PC-9 (cell line): ENCODE measurements at regions of chr19 and their contacts with region 1.

Region 1: DNA sequence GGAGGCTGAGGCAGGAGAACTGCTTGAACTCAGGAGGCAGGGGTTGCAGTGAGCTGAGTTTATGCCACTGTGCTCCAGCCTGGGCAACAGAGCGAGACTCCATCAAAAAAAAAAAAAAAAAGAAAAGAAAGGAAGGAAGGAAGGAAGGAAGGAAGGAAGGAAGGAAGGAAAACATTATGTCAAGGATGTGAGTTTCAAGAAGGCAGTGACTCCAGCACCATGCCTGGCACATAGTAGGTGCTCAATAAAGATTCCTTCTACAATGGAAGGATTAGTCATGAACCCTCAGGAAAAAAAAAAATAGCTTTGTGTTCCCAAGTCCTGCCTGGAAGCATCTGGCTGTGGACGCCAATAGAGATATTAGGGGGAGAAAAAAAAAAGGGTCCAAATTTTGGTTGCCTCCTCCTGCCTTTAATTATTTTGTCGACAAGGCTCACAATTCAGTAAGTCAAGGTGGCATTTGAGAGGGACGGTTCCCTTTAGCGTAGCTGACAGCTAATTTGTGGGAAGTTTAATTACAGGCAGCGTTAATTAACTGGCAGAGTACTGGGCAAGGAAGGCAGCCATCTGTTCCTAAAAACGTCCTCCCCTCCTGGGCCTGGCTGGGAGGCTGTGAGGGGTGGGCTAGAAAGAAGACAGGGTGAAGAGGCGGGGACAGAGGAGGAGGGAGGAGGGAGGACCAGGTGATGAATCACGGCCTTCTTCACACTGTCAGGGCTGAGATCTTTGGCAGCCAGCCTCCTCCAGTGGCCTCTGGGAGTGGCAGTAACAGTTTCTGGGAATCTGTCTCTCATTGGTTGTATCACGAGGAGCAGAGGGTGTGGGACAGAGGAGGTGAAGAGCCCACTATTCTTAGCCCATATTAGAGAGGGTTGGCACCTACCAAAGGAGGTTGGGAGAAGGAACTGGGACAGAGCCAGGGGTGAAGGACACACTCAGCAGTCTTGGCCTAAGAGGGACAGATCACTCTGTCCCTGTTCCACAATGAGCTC is 9.8 kb upstream of the ZNRF4 start:
- DNase-seq: no peak
- H3K4me3 ChIP-seq: no peak overlapping the region
- H3K27ac ChIP-seq: no peak overlapping the region
- H3K4me1 ChIP-seq: no peaks in the 10 kb centered on the region
- H3K27me3 ChIP-seq: 0 out of 2 replicates have a peak, but pooled peaks cover 2% of the 10 kb centered on the region
- CTCF ChIP-seq: no peak

Region 2: GRCh38 chr19:4589579-4590410 is 855.6 kb before region 1 on chr19:
- CTCF ChIA-PET with region 1: no interaction called
- POLR2A ChIA-PET with region 1: no interaction called
- intact Hi-C with region 1: no loop called
- DNase-seq: no peak
- H3K4me3 ChIP-seq: no peak overlapping the region
- H3K27ac ChIP-seq: no peak overlapping the region
- H3K4me1 ChIP-seq: no peaks in the 10 kb centered on the region
- H3K27me3 ChIP-seq: peaks cover 8% of the 10 kb centered on the region
- CTCF ChIP-seq: peak; percentile 50; the same call in 1 of the 2 replicates

Region 3: GRCh38 chr19:5424192-5424973 is 21.0 kb before region 1 on chr19:
- CTCF ChIA-PET with region 1: interaction called, 12 read pairs
- POLR2A ChIA-PET with region 1: no interaction called
- intact Hi-C with region 1: no loop called
- DNase-seq: no peak
- H3K4me3 ChIP-seq: no peak overlapping the region
- H3K27ac ChIP-seq: no peak overlapping the region
- H3K4me1 ChIP-seq: no peaks in the 10 kb centered on the region
- H3K27me3 ChIP-seq: peaks cover 56% of the 10 kb centered on the region
- CTCF ChIP-seq: no peak

Region 4: GRCh38 chr19:5492635-5493409 is 47.5 kb after region 1 on chr19:
- CTCF ChIA-PET with region 1: interaction called, 10 read pairs
- POLR2A ChIA-PET with region 1: no interaction called
- intact Hi-C with region 1: no loop called
- DNase-seq: no peak
- H3K4me3 ChIP-seq: no peak overlapping the region
- H3K27ac ChIP-seq: no peak overlapping the region
- H3K4me1 ChIP-seq: no peaks in the 10 kb centered on the region
- H3K27me3 ChIP-seq: no peaks in the 10 kb centered on the region
- CTCF ChIP-seq: no peak

Region 5: GRCh38 chr19:5743630-5744029 is 298.3 kb after region 1 on chr19:
- CTCF ChIA-PET with region 1: no interaction called
- POLR2A ChIA-PET with region 1: no interaction called
- intact Hi-C with region 1: no loop called
- DNase-seq: no peak
- H3K4me3 ChIP-seq: no peak overlapping the region
- H3K27ac ChIP-seq: no peak overlapping the region
- H3K4me1 ChIP-seq: no peaks in the 10 kb centered on the region
- H3K27me3 ChIP-seq: no peaks in the 10 kb centered on the region
- CTCF ChIP-seq: no peak